Activated CD8-positive, alpha-beta T cell treated with anti-CD3 and anti-CD28 coated beads for 36 hours (primary cell): ENCODE measurements at regions of chr1 and their contacts with region 1.

Region 1: GRCh38 chr1:66242646-66243547 is 291.1 kb upstream of the SGIP1 start:
- DNase-seq: peak; percentile 84
- ATAC-seq: peak; percentile 61
- H3K4me3 Mint-ChIP-seq: no peak overlapping the region
- H3K27ac Mint-ChIP-seq: no peak overlapping the region
- H3K4me1 Mint-ChIP-seq: peaks cover 21% of the 10 kb centered on the region
- H3K27me3 Mint-ChIP-seq: peaks cover 6% of the 10 kb centered on the region
- CTCF ChIP-seq: peak; percentile 99

Region 2: GRCh38 chr1:65825741-65826140 is 417.2 kb before region 1 on chr1:
- CTCF ChIA-PET with region 1: no interaction called
- POLR2A ChIA-PET with region 1: no interaction called
- intact Hi-C with region 1: no loop called
- DNase-seq: no peak
- ATAC-seq: no peak
- H3K4me3 Mint-ChIP-seq: no peak overlapping the region
- H3K27ac Mint-ChIP-seq: no peak overlapping the region
- H3K4me1 Mint-ChIP-seq: peaks cover 4% of the 10 kb centered on the region
- H3K27me3 Mint-ChIP-seq: peaks cover 25% of the 10 kb centered on the region
- CTCF ChIP-seq: no peak

Region 3: DNA sequence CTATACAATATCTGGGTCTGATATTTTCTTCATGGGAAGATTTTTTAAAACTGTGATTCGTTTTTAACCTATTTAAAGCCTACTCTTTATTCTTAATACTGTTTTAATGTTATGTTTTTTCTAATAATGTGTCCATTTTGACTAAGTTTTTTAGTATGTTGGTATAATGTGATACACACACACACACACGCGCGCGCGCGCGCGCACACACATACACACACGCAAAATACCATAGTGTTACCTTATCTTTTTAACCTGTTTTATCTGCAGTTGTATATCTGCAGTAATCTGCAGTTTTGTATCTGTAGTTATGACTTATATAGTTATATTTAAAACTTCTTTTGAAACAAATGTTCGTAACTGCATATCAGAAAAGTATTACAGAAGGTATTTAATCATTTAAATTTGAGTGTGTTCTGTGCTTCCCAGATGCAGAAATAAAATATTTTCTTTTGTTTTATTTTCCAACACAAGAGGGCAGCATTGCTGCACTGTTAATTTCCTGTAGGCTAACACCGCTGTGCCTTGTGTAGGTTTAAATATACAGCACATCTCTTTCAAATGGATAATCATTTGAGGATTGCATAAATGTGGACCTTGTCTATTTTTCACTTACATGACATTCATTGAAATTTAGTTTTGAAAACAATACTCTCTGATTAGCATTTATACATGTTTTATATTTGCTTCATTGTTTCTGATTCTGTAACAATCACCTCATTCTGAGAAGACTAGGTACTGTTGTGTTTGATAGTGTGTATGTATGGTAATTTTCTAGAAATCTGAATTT is 284.1 kb before region 1 on chr1:
- CTCF ChIA-PET with region 1: interaction called, 239 read pairs
- POLR2A ChIA-PET with region 1: interaction called, 3 read pairs
- intact Hi-C with region 1: loop called (anchors 1 kb)
- DNase-seq: peak; percentile 12
- ATAC-seq: peak; percentile 51
- H3K4me3 Mint-ChIP-seq: no peak overlapping the region
- H3K27ac Mint-ChIP-seq: no peak overlapping the region
- H3K4me1 Mint-ChIP-seq: no peaks in the 10 kb centered on the region
- H3K27me3 Mint-ChIP-seq: peaks cover 2% of the 10 kb centered on the region
- CTCF ChIP-seq: peak; percentile 78

Region 4: GRCh38 chr1:66168948-66169671 is 73.8 kb before region 1 on chr1:
- CTCF ChIA-PET with region 1: interaction called, 13 read pairs
- POLR2A ChIA-PET with region 1: no interaction called
- intact Hi-C with region 1: no loop called
- DNase-seq: no peak
- ATAC-seq: peak; percentile 61
- H3K4me3 Mint-ChIP-seq: no peak overlapping the region
- H3K27ac Mint-ChIP-seq: no peak overlapping the region
- H3K4me1 Mint-ChIP-seq: peaks cover 15% of the 10 kb centered on the region
- H3K27me3 Mint-ChIP-seq: peaks cover 8% of the 10 kb centered on the region
- CTCF ChIP-seq: no peak

Region 5: GRCh38 chr1:66253330-66253921 is 10.5 kb after region 1 on chr1:
- CTCF ChIA-PET with region 1: interaction called, 44 read pairs
- POLR2A ChIA-PET with region 1: interaction called, 5 read pairs
- intact Hi-C with region 1: no loop called
- DNase-seq: no peak
- ATAC-seq: peak; percentile 89
- H3K4me3 Mint-ChIP-seq: no peak overlapping the region
- H3K27ac Mint-ChIP-seq: no peak overlapping the region
- H3K4me1 Mint-ChIP-seq: peaks cover 46% of the 10 kb centered on the region
- H3K27me3 Mint-ChIP-seq: peaks cover 1% of the 10 kb centered on the region
- CTCF ChIP-seq: peak; percentile 83

Region 6: DNA sequence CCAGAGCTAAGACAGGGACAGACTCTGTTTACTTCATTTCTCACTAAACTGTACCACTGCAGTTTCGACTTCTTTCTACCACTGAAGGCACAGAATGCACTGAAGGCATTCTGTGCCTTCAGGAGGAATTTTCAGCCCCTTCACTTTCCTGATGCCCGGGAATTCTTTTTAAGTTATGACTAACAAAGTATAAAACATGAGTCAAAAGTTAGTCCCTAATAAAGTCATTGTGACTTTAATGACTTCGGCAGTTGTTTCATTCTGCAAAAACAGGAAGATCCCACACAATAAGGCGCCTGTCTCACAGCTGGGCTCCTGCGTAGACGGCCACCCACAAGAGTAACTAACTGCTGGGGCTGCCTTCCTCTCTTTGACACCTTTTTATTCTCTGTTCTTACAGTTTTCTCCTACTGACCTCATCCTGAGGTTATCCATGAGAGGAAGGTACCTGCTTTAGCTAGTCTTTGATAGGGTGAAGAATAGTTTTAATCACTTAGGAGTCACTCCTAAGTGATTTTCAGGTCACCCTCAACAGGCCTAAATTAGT is 107.2 kb after region 1 on chr1:
- CTCF ChIA-PET with region 1: interaction called, 10 read pairs
- POLR2A ChIA-PET with region 1: interaction called, 4 read pairs
- intact Hi-C with region 1: no loop called
- DNase-seq: peak; percentile 83
- ATAC-seq: peak; percentile 74
- H3K4me3 Mint-ChIP-seq: peak overlapping the region; percentile 70
- H3K27ac Mint-ChIP-seq: peak overlapping the region; percentile 81
- H3K4me1 Mint-ChIP-seq: peaks cover 96% of the 10 kb centered on the region
- H3K27me3 Mint-ChIP-seq: no peaks in the 10 kb centered on the region
- CTCF ChIP-seq: no peak

Region 7: DNA sequence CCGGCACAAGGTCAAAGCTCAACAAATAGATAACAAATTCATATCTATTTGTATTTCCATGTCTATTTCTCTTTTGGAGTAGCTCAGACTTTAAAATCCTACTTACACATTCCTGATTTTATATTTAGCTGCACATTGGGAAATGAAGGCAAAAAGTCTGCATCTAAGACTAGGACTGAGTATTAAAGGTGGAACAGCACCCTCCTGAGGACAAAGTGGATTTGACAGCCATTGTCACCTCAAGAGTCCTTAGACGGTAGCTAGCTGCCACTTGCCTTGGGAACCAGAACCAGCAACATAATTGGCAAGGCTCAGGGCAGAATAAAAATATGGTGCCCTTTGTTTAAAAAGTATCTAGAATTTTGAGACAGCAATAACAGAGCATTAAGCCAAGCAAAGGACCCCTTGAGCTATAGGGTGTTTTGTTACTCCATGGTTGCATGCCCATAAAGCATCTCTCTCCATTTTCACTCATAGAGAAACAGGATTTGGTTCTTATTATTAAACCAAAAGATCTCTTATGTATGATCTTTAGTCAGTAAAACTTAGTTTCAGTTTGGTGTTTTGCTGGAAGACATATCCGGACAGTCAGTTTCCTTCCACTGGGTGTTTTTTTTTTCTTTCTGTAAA is 261.1 kb after region 1 on chr1:
- CTCF ChIA-PET with region 1: interaction called, 38 read pairs
- POLR2A ChIA-PET with region 1: no interaction called
- intact Hi-C with region 1: loop called (anchors 5 kb)
- DNase-seq: peak; percentile 70
- ATAC-seq: peak; percentile 74
- H3K4me3 Mint-ChIP-seq: no peak overlapping the region
- H3K27ac Mint-ChIP-seq: no peak overlapping the region
- H3K4me1 Mint-ChIP-seq: no peaks in the 10 kb centered on the region
- H3K27me3 Mint-ChIP-seq: peaks cover 11% of the 10 kb centered on the region
- CTCF ChIP-seq: peak; percentile 80